Endothelial cell of umbilical vein (primary cell): ENCODE measurements at regions of chr5 and their contacts with region 1.

Region 1: GRCh38 chr5:17204133-17204489 is 13.3 kb upstream of the BASP1 start:
- DNase-seq: no peak
- H3K4me3 ChIP-seq: no peak overlapping the region
- H3K27ac ChIP-seq: no peak overlapping the region
- H3K4me1 ChIP-seq: no peaks in the 10 kb centered on the region
- H3K27me3 ChIP-seq: peaks cover 5 to 8% of the 10 kb centered on the region in 2 experiments
- CTCF ChIP-seq: no peak
- POLR2A ChIP-seq: no peak

Region 2: DNA sequence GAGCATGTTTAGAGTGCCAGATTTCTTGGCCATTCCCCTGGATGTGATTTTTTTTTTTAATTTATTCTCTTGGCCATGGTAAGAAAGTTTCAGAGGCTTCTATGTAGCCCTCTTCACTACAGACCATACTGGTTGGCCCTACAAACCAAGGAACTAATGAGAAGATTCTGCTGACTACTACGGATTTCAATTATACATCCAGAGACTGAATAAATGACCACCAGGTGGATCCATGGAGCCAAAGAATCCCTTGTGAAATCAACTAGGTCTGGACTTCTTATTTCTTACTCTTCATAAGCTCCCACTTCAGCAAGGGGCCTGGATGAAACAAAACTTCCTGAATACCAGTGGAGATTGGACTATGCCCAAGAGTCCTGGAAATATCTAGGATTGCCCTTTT is 766.1 kb before region 1 on chr5:
- CTCF ChIA-PET with region 1: interaction called, 13 read pairs
- POLR2A ChIA-PET with region 1: no interaction called
- dilution Hi-C with region 1: no loop called
- intact Hi-C with region 1: no loop called
- DNase-seq: peak; percentile 11
- H3K4me3 ChIP-seq: no peak overlapping the region
- H3K27ac ChIP-seq: no peak overlapping the region
- H3K4me1 ChIP-seq: no peaks in the 10 kb centered on the region
- H3K27me3 ChIP-seq: peaks cover 0 to 7% of the 10 kb centered on the region in 2 experiments
- CTCF ChIP-seq: no peak
- POLR2A ChIP-seq: no peak

Region 3: DNA sequence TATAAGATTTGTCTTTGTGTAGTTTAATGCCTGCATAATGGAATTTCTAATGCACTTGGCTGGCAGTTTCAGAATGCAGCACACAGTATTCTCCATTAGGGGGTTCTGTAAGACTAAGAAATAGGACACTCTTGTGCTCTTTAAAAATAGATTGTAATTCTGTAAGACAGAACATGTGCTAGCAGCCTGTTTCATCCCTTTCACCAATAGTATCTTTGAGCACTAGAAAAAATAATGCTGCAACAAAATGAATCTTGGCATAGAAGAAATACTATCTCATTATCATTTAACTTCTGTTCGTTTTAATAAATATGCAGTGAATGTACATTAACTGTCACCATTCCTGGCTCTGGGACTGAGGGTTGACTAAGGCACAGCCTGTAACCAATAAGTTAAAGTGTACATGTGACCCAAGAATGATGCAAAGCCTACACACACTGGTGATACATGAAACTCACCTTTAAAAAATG is 714.8 kb before region 1 on chr5:
- CTCF ChIA-PET with region 1: interaction called, 10 read pairs
- POLR2A ChIA-PET with region 1: no interaction called
- dilution Hi-C with region 1: no loop called
- intact Hi-C with region 1: loop called (anchors 2 kb)
- DNase-seq: peak; percentile 41
- H3K4me3 ChIP-seq: no peak overlapping the region
- H3K27ac ChIP-seq: no peak overlapping the region
- H3K4me1 ChIP-seq: no peaks in the 10 kb centered on the region
- H3K27me3 ChIP-seq: peaks cover 0 to 3% of the 10 kb centered on the region in 2 experiments
- CTCF ChIP-seq: peak; percentile 5 to 40
- POLR2A ChIP-seq: no peak

Region 4: GRCh38 chr5:16574789-16575721 is 629.1 kb before region 1 on chr5:
- CTCF ChIA-PET with region 1: no interaction called
- POLR2A ChIA-PET with region 1: no interaction called
- dilution Hi-C with region 1: no loop called
- intact Hi-C with region 1: no loop called
- DNase-seq: no peak
- H3K4me3 ChIP-seq: no peak overlapping the region
- H3K27ac ChIP-seq: no peak overlapping the region
- H3K4me1 ChIP-seq: no peaks in the 10 kb centered on the region
- H3K27me3 ChIP-seq: no peaks in the 10 kb centered on the region
- CTCF ChIP-seq: no peak
- POLR2A ChIP-seq: no peak

Region 5: GRCh38 chr5:16656561-16657191 is 547.4 kb before region 1 on chr5:
- CTCF ChIA-PET with region 1: no interaction called
- POLR2A ChIA-PET with region 1: no interaction called
- dilution Hi-C with region 1: no loop called
- intact Hi-C with region 1: loop called (anchors 10 kb)
- DNase-seq: peak; percentile 51
- H3K4me3 ChIP-seq: no peak overlapping the region
- H3K27ac ChIP-seq: no peak overlapping the region
- H3K4me1 ChIP-seq: no peaks in the 10 kb centered on the region
- H3K27me3 ChIP-seq: peaks cover 2 to 9% of the 10 kb centered on the region in 2 experiments
- CTCF ChIP-seq: no peak
- POLR2A ChIP-seq: no peak

Region 6: DNA sequence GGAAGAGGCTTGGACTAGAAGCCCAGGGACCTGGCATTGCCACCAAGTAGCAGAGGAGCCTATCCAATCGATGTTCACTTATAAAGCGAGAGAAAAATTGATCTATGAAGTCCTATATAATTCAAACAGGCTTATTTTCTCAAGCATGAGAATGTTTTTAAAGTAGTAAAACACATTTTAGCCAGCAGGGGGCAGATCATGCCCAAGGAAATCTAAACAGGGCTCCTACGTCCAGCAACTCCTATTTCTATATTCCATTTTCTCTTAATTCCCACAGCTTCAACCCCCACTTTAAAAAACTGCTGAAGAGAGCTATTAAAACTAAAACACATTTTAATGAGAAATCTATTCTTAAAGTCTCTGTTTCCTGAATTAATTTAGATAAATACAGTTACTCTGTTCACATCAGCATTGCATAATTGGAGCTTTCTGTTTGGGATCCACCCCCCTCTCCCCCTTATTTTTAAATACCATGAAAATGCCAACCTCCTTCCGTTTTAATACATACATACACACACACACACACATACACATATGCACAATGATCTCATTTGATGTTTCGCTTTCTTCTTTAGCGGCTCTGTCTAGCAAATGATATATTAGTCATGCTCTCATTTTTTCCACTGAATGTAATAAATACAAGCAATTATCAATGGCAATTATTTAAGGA is 412.9 kb before region 1 on chr5:
- CTCF ChIA-PET with region 1: interaction called, 24 read pairs
- POLR2A ChIA-PET with region 1: no interaction called
- dilution Hi-C with region 1: loop called (anchors 25 kb)
- intact Hi-C with region 1: loop called (anchors 1 kb)
- DNase-seq: peak; percentile 79
- H3K4me3 ChIP-seq: no peak overlapping the region
- H3K27ac ChIP-seq: no peak overlapping the region
- H3K4me1 ChIP-seq: no peaks in the 10 kb centered on the region
- H3K27me3 ChIP-seq: no peaks in the 10 kb centered on the region
- CTCF ChIP-seq: peak; percentile 35 to 55
- POLR2A ChIP-seq: no peak

Region 7: DNA sequence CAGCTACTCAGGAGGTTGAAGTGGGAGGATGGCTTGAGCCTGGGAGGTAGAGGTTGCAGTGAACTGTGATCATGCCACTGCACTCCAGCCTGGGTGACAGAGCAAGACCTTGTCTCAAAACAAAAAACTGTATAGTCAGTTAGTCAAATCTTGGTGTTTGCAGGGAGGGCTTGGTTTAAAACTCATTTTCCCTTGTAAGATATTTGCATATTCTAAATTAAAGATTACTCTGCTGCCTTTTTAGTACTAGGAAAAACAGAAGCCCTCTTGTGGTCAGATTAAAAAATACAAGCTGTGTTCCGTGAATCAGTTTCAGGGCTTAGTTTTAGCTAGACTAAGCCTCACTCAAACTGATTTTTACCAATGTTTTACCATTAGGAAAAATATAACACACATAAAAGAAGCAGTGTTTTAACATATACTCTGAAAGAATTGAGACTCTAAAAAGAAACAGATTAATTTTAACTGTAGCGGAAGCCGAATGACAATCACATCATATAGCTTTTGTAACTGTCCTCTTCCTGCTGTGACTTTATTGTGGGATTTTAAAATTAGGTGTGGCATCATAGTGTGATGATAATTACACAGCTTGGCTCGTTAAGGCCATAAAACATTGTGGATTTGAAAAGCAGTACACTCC is 71.5 kb before region 1 on chr5:
- CTCF ChIA-PET with region 1: no interaction called
- POLR2A ChIA-PET with region 1: no interaction called
- dilution Hi-C with region 1: no loop called
- intact Hi-C with region 1: no loop called
- DNase-seq: peak; percentile 67
- H3K4me3 ChIP-seq: no peak overlapping the region
- H3K27ac ChIP-seq: no peak overlapping the region
- H3K4me1 ChIP-seq: peaks cover 23% of the 10 kb centered on the region
- H3K27me3 ChIP-seq: no peaks in the 10 kb centered on the region
- CTCF ChIP-seq: peak; percentile 26 to 27
- POLR2A ChIP-seq: no peak